WTC11 (cell line): ENCODE measurements at regions of chr3 and their contacts with region 1.

Region 1: GRCh38 chr3:170811928-170812591 is 57.9 kb downstream of the RPL22L1 start:
- DNase-seq: peak; percentile 77
- ATAC-seq: peak; percentile 82
- H3K4me3 Mint-ChIP-seq: no peak overlapping the region
- H3K27ac Mint-ChIP-seq: no peak overlapping the region
- H3K4me1 Mint-ChIP-seq: peaks cover 60% of the 10 kb centered on the region
- H3K27me3 Mint-ChIP-seq: peaks cover 11% of the 10 kb centered on the region
- CTCF ChIP-seq: peak; percentile 84

Region 2: DNA sequence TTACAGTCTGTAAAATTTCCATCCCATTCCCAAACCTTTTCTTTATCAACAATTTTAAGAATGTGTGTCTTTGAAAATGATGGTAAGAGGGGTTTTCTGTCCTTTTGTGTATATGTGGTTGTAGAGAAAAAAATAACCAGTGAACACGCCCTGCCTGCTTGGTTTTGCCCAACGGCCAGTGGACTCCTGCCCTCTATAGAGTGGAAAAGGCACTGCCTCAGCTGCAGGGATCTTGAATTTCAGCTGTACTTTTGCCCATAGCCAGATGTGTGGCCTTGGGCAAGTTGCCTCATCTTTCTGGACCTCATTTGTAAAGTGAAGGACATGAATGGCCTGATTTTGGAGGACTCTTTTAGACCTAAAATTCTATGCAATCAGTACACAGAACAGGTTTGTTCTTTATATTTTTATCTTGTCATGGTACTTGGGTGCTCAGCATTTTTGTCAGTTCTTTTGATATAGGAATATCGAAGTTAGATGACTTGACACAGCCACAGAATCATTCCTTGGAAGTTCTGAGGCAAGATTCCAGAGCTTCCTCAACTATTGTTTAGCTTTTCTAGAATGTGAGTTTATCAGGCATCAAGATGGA is 312.4 kb before region 1 on chr3:
- CTCF ChIA-PET with region 1: interaction called, 19 read pairs
- POLR2A ChIA-PET with region 1: no interaction called
- DNase-seq: peak; percentile 47
- ATAC-seq: peak; percentile 89
- H3K4me3 Mint-ChIP-seq: no peak overlapping the region
- H3K27ac Mint-ChIP-seq: no peak overlapping the region
- H3K4me1 Mint-ChIP-seq: no peaks in the 10 kb centered on the region
- H3K27me3 Mint-ChIP-seq: no peaks in the 10 kb centered on the region
- CTCF ChIP-seq: peak; percentile 46; the same call in 1 of the 2 replicates

Region 3: GRCh38 chr3:170584585-170585007 is 227.5 kb before region 1 on chr3:
- CTCF ChIA-PET with region 1: interaction called, 42 read pairs
- POLR2A ChIA-PET with region 1: no interaction called
- DNase-seq: peak; percentile 93
- ATAC-seq: peak; percentile 88
- H3K4me3 Mint-ChIP-seq: peak overlapping the region; percentile 78
- H3K27ac Mint-ChIP-seq: no peak overlapping the region
- H3K4me1 Mint-ChIP-seq: peaks cover 10% of the 10 kb centered on the region
- H3K27me3 Mint-ChIP-seq: peaks cover 63% of the 10 kb centered on the region
- CTCF ChIP-seq: no peak

Region 4: GRCh38 chr3:170689893-170690660 is 122.0 kb before region 1 on chr3:
- CTCF ChIA-PET with region 1: interaction called, 25 read pairs
- POLR2A ChIA-PET with region 1: no interaction called
- DNase-seq: peak; percentile 79
- ATAC-seq: peak; percentile 78
- H3K4me3 Mint-ChIP-seq: no peak overlapping the region
- H3K27ac Mint-ChIP-seq: no peak overlapping the region; the same call in 1 of the 2 replicates
- H3K4me1 Mint-ChIP-seq: peaks cover 31% of the 10 kb centered on the region
- H3K27me3 Mint-ChIP-seq: peaks cover 10% of the 10 kb centered on the region; the same call in 1 of the 2 replicates
- CTCF ChIP-seq: peak; percentile 82

Region 5: DNA sequence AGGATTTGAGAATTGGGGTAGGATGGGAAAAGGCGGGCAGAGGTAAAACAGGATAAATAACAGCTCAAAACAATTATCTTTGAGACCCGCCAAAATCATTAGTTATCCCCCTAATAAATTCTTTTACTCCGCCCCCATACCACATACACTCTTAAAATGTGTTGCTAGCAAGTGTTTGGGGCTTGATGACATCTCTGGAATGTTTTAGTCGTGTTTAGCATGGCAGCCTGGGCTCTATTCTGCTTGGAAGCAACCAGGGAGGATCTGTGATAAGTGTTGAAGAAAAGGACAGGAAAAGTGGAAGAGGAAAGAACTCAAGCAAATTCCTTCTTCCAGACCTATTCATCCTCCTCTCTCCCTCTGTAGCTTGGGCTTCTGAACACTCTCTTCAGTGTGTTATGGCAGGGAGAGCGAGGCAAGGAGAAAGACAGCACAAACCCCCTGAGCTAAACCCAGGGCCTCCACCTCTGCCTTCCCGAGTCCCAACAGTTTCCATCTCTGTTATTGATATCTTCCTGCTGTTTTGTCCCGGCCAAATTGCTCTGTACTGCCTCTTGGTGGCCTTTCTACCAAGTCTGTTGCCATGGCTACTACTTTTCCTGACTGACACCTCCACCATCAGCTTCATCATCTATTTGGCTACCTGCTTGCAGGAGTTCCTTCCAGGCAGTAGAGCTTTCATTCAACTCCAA is 77.9 kb before region 1 on chr3:
- CTCF ChIA-PET with region 1: interaction called, 13 read pairs
- POLR2A ChIA-PET with region 1: no interaction called
- DNase-seq: no peak
- ATAC-seq: peak; percentile 61
- H3K4me3 Mint-ChIP-seq: no peak overlapping the region
- H3K27ac Mint-ChIP-seq: no peak overlapping the region
- H3K4me1 Mint-ChIP-seq: peaks cover 17% of the 10 kb centered on the region
- H3K27me3 Mint-ChIP-seq: no peaks in the 10 kb centered on the region
- CTCF ChIP-seq: no peak

Region 6: DNA sequence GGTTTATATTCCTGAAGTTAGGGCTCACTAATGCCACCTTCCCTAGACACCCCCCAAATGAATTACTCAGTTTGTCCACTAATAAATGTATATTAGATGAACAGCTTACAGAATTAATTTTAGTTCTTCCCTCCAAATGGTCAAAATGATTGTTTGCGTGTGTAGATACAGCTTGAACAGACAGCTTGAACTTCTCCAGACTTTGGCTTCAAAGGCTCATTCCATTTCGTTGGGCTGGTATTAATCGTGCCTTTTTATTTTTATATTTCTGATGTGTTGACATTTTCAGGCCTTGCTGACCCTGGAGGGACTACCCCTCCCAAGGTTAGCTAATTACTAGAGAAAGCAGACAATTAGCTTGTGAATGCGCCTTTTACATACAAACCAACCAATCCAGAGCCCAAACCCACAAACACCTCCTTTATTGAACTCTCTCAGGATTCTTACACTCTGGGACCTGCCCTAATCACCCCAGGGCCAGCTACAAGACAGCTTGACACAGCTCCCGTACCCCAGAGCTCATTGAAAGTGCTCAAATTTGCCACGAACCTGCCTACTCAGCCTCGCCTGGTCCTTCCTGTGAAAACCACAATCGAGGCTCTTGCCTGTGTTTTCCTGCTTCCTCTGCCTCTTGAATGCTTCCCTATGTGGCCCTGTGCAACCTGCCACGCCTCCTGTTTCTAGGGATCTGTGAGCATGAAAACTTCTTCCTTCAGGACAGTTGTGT is 17.6 kb after region 1 on chr3:
- CTCF ChIA-PET with region 1: interaction called, 14 read pairs
- POLR2A ChIA-PET with region 1: no interaction called
- DNase-seq: no peak
- ATAC-seq: peak; percentile 43
- H3K4me3 Mint-ChIP-seq: no peak overlapping the region
- H3K27ac Mint-ChIP-seq: peak overlapping the region; percentile 8
- H3K4me1 Mint-ChIP-seq: peaks cover 72% of the 10 kb centered on the region
- H3K27me3 Mint-ChIP-seq: peaks cover 21% of the 10 kb centered on the region
- CTCF ChIP-seq: no peak

Region 7: GRCh38 chr3:170848292-170848917 is 36.3 kb after region 1 on chr3:
- CTCF ChIA-PET with region 1: interaction called, 13 read pairs
- POLR2A ChIA-PET with region 1: no interaction called
- DNase-seq: no peak
- ATAC-seq: no peak
- H3K4me3 Mint-ChIP-seq: no peak overlapping the region
- H3K27ac Mint-ChIP-seq: no peak overlapping the region
- H3K4me1 Mint-ChIP-seq: no peaks in the 10 kb centered on the region
- H3K27me3 Mint-ChIP-seq: no peaks in the 10 kb centered on the region; the same call in 1 of the 2 replicates
- CTCF ChIP-seq: no peak

Region 8: DNA sequence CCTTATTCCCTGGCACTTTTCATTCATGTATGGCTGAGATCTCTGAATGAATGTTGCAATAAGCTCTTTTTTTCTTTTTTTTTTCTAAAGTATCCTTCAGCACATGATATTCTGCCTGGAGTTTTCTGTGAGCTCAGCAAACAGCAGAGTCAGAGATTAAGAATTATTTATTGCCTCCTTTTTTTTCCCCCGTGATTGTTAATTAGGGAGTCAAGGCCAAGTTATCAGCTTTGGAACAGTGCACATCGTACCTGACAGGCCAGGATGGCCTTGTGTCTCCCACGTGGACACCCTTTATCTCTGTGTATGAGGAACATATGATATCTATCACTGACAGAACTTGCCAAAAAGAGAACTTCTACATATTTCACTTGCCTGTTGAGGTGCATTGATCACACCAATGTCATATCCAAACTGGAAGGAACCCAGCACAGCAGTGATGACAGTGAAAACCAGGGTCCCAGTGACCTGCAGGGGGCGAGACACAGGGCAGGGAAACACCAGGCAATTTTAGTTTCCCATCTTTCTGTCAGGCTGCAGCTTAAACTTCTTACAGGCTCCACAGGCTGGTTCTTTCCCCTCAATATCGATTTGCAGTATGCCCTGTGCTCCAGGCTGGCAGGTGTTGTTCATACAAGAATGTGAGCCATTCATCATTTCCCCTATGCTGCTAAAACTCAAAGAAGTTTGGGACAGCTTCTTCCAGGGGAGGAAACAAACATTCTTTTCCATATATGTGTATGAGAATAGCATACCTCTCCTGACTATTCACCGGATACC is 206.3 kb after region 1 on chr3:
- CTCF ChIA-PET with region 1: no interaction called
- POLR2A ChIA-PET with region 1: no interaction called
- DNase-seq: peak; percentile 43
- ATAC-seq: peak; percentile 73
- H3K4me3 Mint-ChIP-seq: no peak overlapping the region
- H3K27ac Mint-ChIP-seq: no peak overlapping the region
- H3K4me1 Mint-ChIP-seq: no peaks in the 10 kb centered on the region
- H3K27me3 Mint-ChIP-seq: no peaks in the 10 kb centered on the region
- CTCF ChIP-seq: 0 out of 2 replicates have a peak, but pooled peaks have one; percentile 23